CD8-positive, alpha-beta T cell (primary cell): ENCODE measurements at regions of chr15 and their contacts with region 1.

Region 1: DNA sequence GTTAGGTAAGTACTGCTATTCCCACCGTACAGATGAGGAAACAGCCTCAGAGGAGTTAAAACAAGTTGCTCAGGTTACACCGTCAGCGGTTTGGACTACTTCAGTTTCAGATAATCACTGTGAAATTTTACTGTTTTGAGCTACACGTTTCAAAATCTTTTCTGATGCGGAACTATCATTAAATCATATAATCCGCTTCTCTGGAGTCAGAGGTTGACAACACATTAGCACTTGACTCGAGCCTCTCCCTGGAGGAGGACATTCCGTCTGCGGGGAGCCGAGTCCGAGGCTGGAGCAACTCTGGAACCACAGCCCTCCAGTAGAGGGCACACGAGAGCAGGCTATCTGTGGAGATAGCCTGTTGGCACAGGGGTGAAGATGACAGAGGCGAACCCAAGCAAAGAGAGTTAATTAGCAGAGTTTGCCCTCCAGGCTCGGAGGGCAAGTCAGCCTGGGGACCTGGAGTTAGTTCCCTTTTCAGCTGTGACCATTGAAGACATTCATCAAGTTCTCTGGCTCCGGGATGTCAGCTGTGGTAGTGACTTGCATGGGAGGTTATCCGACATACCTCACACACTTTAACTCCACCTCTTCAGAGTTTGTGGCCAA is 131.2 kb downstream of the IGF1R start:
- DNase-seq: peak; percentile 44 to 82 (median 72)
- ATAC-seq: peak; percentile 84
- H3K4me3 ChIP-seq: no peak overlapping the region
- H3K4me3 Mint-ChIP-seq: peak overlapping the region; percentile 52
- H3K27ac ChIP-seq: no peak overlapping the region
- H3K27ac Mint-ChIP-seq: no peak overlapping the region
- H3K4me1 ChIP-seq: peaks cover 25% of the 10 kb centered on the region
- H3K4me1 Mint-ChIP-seq: peaks cover 38% of the 10 kb centered on the region
- H3K27me3 ChIP-seq: no peaks in the 10 kb centered on the region
- H3K27me3 Mint-ChIP-seq: no peaks in the 10 kb centered on the region
- CTCF ChIP-seq: peak; percentile 91

Region 2: GRCh38 chr15:98518823-98519561 is 260.6 kb before region 1 on chr15:
- CTCF ChIA-PET with region 1: interaction called, 5 read pairs
- POLR2A ChIA-PET with region 1: no interaction called
- intact Hi-C with region 1: loop called (anchors 2 kb)
- DNase-seq: peak in 8 of 9 experiments; percentile 21 to 78 (median 45)
- ATAC-seq: peak; percentile 49
- H3K4me3 ChIP-seq: no peak overlapping the region
- H3K4me3 Mint-ChIP-seq: no peak overlapping the region
- H3K27ac ChIP-seq: no peak overlapping the region
- H3K27ac Mint-ChIP-seq: no peak overlapping the region
- H3K4me1 ChIP-seq: no peaks in the 10 kb centered on the region
- H3K4me1 Mint-ChIP-seq: no peaks in the 10 kb centered on the region
- H3K27me3 ChIP-seq: no peaks in the 10 kb centered on the region
- H3K27me3 Mint-ChIP-seq: peaks cover 3% of the 10 kb centered on the region
- CTCF ChIP-seq: peak; percentile 78

Region 3: GRCh38 chr15:98719137-98719740 is 60.3 kb before region 1 on chr15:
- CTCF ChIA-PET with region 1: no interaction called
- POLR2A ChIA-PET with region 1: no interaction called
- intact Hi-C with region 1: no loop called
- DNase-seq: no peak
- ATAC-seq: no peak
- H3K4me3 ChIP-seq: no peak overlapping the region
- H3K4me3 Mint-ChIP-seq: no peak overlapping the region
- H3K27ac ChIP-seq: no peak overlapping the region
- H3K27ac Mint-ChIP-seq: no peak overlapping the region
- H3K4me1 ChIP-seq: peaks cover 70% of the 10 kb centered on the region
- H3K4me1 Mint-ChIP-seq: peaks cover 89% of the 10 kb centered on the region
- H3K27me3 ChIP-seq: no peaks in the 10 kb centered on the region
- H3K27me3 Mint-ChIP-seq: no peaks in the 10 kb centered on the region
- CTCF ChIP-seq: no peak

Region 4: GRCh38 chr15:98767692-98768091 is 11.9 kb before region 1 on chr15:
- CTCF ChIA-PET with region 1: interaction called, 10 read pairs
- POLR2A ChIA-PET with region 1: no interaction called
- intact Hi-C with region 1: no loop called
- DNase-seq: no peak
- ATAC-seq: no peak
- H3K4me3 ChIP-seq: no peak overlapping the region
- H3K4me3 Mint-ChIP-seq: no peak overlapping the region
- H3K27ac ChIP-seq: no peak overlapping the region
- H3K27ac Mint-ChIP-seq: no peak overlapping the region
- H3K4me1 ChIP-seq: peaks cover 6% of the 10 kb centered on the region
- H3K4me1 Mint-ChIP-seq: peaks cover 49% of the 10 kb centered on the region
- H3K27me3 ChIP-seq: no peaks in the 10 kb centered on the region
- H3K27me3 Mint-ChIP-seq: peaks cover 3% of the 10 kb centered on the region
- CTCF ChIP-seq: no peak

Region 5: GRCh38 chr15:98881526-98882520 is 102.3 kb after region 1 on chr15:
- CTCF ChIA-PET with region 1: interaction called, 53 read pairs
- POLR2A ChIA-PET with region 1: no interaction called
- intact Hi-C with region 1: loop called (anchors 1 kb)
- DNase-seq: peak in 2 of 9 experiments; percentile 47 to 64
- ATAC-seq: no peak
- H3K4me3 ChIP-seq: no peak overlapping the region
- H3K4me3 Mint-ChIP-seq: no peak overlapping the region
- H3K27ac ChIP-seq: no peak overlapping the region
- H3K27ac Mint-ChIP-seq: no peak overlapping the region
- H3K4me1 ChIP-seq: no peaks in the 10 kb centered on the region
- H3K4me1 Mint-ChIP-seq: peaks cover 17% of the 10 kb centered on the region
- H3K27me3 ChIP-seq: no peaks in the 10 kb centered on the region
- H3K27me3 Mint-ChIP-seq: no peaks in the 10 kb centered on the region
- CTCF ChIP-seq: peak; percentile 60

Region 6: DNA sequence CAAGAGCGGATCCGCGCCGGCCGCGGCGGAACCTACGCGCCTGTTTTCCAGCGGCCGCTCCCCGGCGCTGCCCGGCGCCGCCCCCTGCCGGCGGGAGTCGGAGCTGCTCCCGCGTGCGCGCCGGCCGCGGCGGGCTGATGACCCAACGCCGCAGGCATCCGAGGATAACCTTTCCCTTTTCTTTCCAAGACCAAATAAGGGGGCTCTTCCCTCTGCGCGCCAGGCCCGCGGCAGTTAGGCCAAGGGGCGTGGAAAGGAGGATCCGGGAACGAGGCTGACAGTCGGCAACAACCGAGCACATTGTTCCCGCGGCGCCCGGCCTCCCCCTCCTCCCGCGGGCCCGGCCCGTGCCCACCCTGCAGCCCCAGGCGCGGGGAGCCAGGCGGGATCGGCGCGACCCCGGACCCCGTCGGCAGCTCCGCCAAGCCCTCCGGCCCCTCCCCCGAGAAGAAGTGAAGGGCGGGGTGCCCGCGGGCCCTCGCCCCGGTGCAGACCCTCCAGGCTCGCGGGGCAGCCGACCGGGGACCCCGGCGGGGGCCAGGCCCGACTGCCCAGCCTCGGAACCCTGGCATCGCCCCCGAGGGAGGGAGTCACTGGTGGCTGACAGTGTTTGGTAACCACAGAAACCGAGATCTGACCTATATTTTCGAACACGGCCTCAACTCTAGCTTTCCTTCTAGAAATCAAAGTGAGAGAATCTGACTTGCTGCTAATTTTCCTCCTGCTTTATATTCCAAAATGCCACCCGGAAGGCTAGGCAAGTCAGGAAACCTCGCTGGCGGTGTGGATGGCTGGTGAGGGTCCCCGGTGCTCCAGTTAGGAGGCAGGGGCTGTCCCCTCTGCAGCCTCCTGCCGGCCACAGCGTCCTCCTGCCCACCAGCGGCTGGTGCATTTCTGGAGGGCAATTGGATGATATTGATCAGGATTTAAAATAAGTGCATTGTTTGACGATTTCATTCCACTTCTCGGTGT is 279.7 kb after region 1 on chr15:
- CTCF ChIA-PET with region 1: interaction called, 6 read pairs
- POLR2A ChIA-PET with region 1: no interaction called
- intact Hi-C with region 1: loop called in 1 of 2 experiments (anchors 5 kb)
- DNase-seq: peak in 8 of 9 experiments; percentile 3 to 65 (median 34)
- ATAC-seq: peak; percentile 69
- H3K4me3 ChIP-seq: peak overlapping the region; percentile 36 to 49
- H3K4me3 Mint-ChIP-seq: peak overlapping the region; percentile 65
- H3K27ac ChIP-seq: no peak overlapping the region
- H3K27ac Mint-ChIP-seq: no peak overlapping the region
- H3K4me1 ChIP-seq: no peaks in the 10 kb centered on the region
- H3K4me1 Mint-ChIP-seq: peaks cover 12% of the 10 kb centered on the region
- H3K27me3 ChIP-seq: peaks cover 10 to 20% of the 10 kb centered on the region in 2 experiments
- H3K27me3 Mint-ChIP-seq: peaks cover 55% of the 10 kb centered on the region
- CTCF ChIP-seq: peak; percentile 61

Region 7: GRCh38 chr15:99213187-99213811 is 433.7 kb after region 1 on chr15:
- CTCF ChIA-PET with region 1: no interaction called
- POLR2A ChIA-PET with region 1: no interaction called
- intact Hi-C with region 1: loop called in 1 of 2 experiments (anchors 10 kb)
- DNase-seq: peak; percentile 21 to 63 (median 51)
- ATAC-seq: peak; percentile 62
- H3K4me3 ChIP-seq: no peak overlapping the region
- H3K4me3 Mint-ChIP-seq: no peak overlapping the region
- H3K27ac ChIP-seq: no peak overlapping the region
- H3K27ac Mint-ChIP-seq: no peak overlapping the region
- H3K4me1 ChIP-seq: no peaks in the 10 kb centered on the region
- H3K4me1 Mint-ChIP-seq: no peaks in the 10 kb centered on the region
- H3K27me3 ChIP-seq: no peaks in the 10 kb centered on the region
- H3K27me3 Mint-ChIP-seq: peaks cover 12% of the 10 kb centered on the region
- CTCF ChIP-seq: peak; percentile 90